A549 (cell line): ENCODE measurements at regions of chr13 and their contacts with region 1.

Region 1: GRCh38 chr13:113208424-113209335 is at the start of gene PCID2:
- DNase-seq: peak; percentile 68 to 91
- ATAC-seq: peak; percentile 81 to 87
- H3K4me3 ChIP-seq: peak within 1 kb of the TSS; percentile 99
- H3K27ac ChIP-seq: peak within 1 kb of the TSS; percentile 100
- H3K4me1 ChIP-seq: peaks cover 38% of the 10 kb centered on the region
- CTCF ChIP-seq: no peak
- EP300 ChIP-seq: no peak
- POLR2A ChIP-seq: peak; percentile 66
- RAD21 ChIP-seq: no peak
- polyA plus RNA-seq, gene PCID2: 68.7 and 71.1 TPM in 2 replicates

Region 2: DNA sequence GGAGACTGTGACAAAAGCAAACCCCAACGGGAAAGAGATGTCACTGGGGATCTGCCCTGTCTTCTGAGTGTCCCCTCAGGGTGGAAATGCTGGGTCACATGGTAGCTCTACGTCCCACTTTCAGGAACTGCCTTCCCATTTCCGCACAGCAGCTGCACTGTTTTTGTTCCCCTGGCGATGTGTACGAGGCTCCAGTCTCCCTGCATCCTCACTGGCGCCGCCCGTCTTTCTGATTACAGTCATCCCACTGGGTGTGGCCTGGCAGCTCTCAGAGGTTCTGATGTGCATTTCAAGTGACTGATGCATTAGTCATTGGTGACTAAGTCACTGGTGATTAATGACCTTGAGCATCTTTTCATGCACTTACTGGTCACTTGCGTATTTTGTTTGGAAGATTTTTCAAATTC is 21.4 kb before region 1 on chr13:
- CTCF ChIA-PET with region 1: no interaction called
- POLR2A ChIA-PET with region 1: interaction called, 18 read pairs
- DNase-seq: peak; percentile 94 to 95
- ATAC-seq: peak; percentile 100
- H3K4me3 ChIP-seq: peak overlapping the region; percentile 31; the same call in 1 of the 3 replicates
- H3K27ac ChIP-seq: peak overlapping the region; percentile 57 to 78
- H3K4me1 ChIP-seq: peaks cover 35% of the 10 kb centered on the region
- CTCF ChIP-seq: no peak
- EP300 ChIP-seq: no peak; a peak in 1 of 5 replicates
- POLR2A ChIP-seq: no peak
- RAD21 ChIP-seq: no peak

Region 3: DNA sequence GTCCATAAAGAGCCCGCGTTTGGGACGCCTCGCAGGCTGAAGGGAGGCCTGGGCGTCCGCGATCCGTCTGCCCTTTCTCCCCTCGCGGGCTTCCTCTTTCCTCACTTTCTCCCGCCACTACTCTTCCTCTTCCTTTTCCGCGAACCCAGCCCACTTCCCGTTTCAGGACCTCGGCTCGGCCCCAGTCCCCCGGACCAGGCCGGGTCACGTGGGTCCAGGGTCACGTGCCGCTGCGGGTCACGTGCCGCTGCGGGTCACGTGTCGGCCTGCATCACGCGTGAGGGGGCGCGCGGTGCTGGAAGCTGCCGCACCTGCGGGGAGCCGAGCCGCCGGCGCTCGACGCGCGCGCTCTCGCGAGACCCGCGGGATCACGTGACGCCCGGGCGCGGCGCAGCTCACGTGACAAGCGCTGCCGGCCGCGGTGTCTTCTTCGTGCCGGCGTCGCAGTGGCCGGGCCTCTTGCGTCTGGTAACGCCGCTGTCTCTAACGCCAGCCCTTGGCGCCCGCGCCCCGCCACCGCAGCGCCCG is 88.2 kb after region 1 on chr13 and contains the start of gene LAMP1:
- CTCF ChIA-PET with region 1: no interaction called
- POLR2A ChIA-PET with region 1: interaction called, 10 read pairs
- DNase-seq: peak; percentile 84 to 98
- ATAC-seq: peak; percentile 84 to 87
- H3K4me3 ChIP-seq: peak within 1 kb of the TSS; percentile 97
- H3K27ac ChIP-seq: peak within 1 kb of the TSS; percentile 92 to 99
- H3K4me1 ChIP-seq: peaks cover 11% of the 10 kb centered on the region; the same call in 2 of the 3 replicates
- CTCF ChIP-seq: no peak
- EP300 ChIP-seq: peak in 1 of 2 experiments; percentile 34; a peak in 2 of 5 replicates
- POLR2A ChIP-seq: peak; percentile 33; the same call in 1 of the 2 replicates
- RAD21 ChIP-seq: no peak
- polyA plus RNA-seq, gene LAMP1: 58.2 and 58.7 TPM in 2 replicates

Region 4: GRCh38 chr13:113584205-113584869 is 375.7 kb after region 1 on chr13 and contains the start of gene TFDP1:
- CTCF ChIA-PET with region 1: no interaction called
- POLR2A ChIA-PET with region 1: no interaction called
- DNase-seq: peak; percentile 75 to 89
- ATAC-seq: peak; percentile 92 to 93
- H3K4me3 ChIP-seq: peak within 1 kb of the TSS; percentile 99
- H3K27ac ChIP-seq: peak within 1 kb of the TSS; percentile 97 to 99
- H3K4me1 ChIP-seq: peaks cover 13% of the 10 kb centered on the region; the same call in 1 of the 3 replicates
- CTCF ChIP-seq: no peak
- EP300 ChIP-seq: no peak
- POLR2A ChIP-seq: peak; percentile 84
- RAD21 ChIP-seq: no peak
- polyA plus RNA-seq, gene TFDP1: 57.9 and 88.4 TPM in 2 replicates